Activated CD8-positive, alpha-beta memory T cell treated with anti-CD3 and anti-CD28 coated beads, Interleukin-2, amount 10 ng/mL, durations not matched to agents 7 days and 5 days (primary cell): ENCODE measurements at regions of chr11 and their contacts with region 1.

Region 1: DNA sequence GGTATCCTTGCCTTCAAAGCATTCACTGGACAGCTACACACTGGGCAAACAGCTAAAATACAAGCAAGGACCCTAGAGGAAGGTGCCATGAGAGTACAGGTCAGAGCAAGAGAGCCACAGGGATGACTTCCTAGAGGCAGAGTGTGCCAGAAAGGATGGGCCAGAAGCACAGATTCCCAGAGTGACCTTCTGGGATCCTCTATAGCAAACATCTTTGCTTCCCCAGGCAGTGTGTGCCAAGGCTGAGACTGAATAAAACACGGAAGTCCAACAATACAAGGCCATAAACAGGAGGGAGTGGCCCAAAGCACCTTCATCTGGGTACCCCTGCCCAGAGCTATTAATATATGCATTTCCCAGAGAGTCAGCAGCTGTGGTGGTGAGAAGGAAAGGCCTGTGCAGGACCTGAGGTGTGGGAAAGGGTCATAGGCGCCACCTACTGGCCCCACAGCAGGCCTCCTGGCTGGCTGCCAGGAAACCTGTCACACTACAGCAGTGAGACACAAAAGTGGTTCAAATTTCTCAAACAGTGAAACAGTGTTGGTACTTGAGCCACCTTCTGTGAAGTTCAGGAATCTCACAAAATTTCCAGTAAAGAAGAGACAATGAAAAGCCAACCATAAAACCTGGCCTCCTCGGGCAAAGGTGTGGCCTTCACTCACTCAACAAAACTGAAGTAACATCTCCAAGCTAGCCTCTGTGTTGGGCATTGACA is 20.3 kb downstream of the CLPB start:
- DNase-seq: peak; percentile 86
- ATAC-seq: peak; percentile 93
- H3K4me3 Mint-ChIP-seq: no peak overlapping the region
- H3K27ac Mint-ChIP-seq: peak overlapping the region; percentile 15
- H3K4me1 Mint-ChIP-seq: peaks cover 25% of the 10 kb centered on the region
- H3K27me3 Mint-ChIP-seq: no peaks in the 10 kb centered on the region

Region 2: GRCh38 chr11:72293910-72294615 is 120.0 kb before region 1 on chr11:
- CTCF ChIA-PET with region 1: interaction called, 18 read pairs
- DNase-seq: peak; percentile 33
- ATAC-seq: no peak
- H3K4me3 Mint-ChIP-seq: no peak overlapping the region
- H3K27ac Mint-ChIP-seq: no peak overlapping the region
- H3K4me1 Mint-ChIP-seq: peaks cover 2% of the 10 kb centered on the region
- H3K27me3 Mint-ChIP-seq: no peaks in the 10 kb centered on the region

Region 3: GRCh38 chr11:72328366-72329224 is 85.5 kb before region 1 on chr11:
- CTCF ChIA-PET with region 1: interaction called, 40 read pairs
- DNase-seq: peak; percentile 62
- ATAC-seq: peak; percentile 55
- H3K4me3 Mint-ChIP-seq: no peak overlapping the region
- H3K27ac Mint-ChIP-seq: peak overlapping the region; percentile 64
- H3K4me1 Mint-ChIP-seq: peaks cover 62% of the 10 kb centered on the region
- H3K27me3 Mint-ChIP-seq: no peaks in the 10 kb centered on the region

Region 4: DNA sequence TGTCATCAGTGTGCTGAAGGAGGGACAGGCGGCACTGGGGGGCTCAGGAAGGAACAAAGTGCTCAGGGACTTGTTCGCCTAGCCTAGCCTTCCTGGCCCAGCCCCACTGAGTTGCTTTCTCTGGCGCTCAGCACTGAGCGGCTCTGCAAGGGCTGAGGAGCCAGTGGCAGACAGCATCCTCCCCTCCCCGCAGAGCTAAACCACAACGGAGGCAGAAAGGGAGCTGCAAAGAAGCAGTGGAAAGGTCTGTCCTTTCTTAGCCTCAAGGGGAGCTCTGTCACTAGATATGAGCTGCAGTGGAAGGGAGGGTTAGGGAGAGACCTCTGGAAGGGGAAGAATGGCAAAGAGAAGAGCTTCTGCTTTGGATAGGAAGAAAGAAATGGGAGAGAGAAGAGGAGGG is 80.4 kb before region 1 on chr11:
- CTCF ChIA-PET with region 1: interaction called, 40 read pairs
- DNase-seq: peak; percentile 89
- ATAC-seq: peak; percentile 95
- H3K4me3 Mint-ChIP-seq: no peak overlapping the region
- H3K27ac Mint-ChIP-seq: peak overlapping the region; percentile 77
- H3K4me1 Mint-ChIP-seq: peaks cover 40% of the 10 kb centered on the region
- H3K27me3 Mint-ChIP-seq: no peaks in the 10 kb centered on the region

Region 5: GRCh38 chr11:72534565-72535547 is 120.8 kb after region 1 on chr11:
- CTCF ChIA-PET with region 1: no interaction called
- DNase-seq: no peak
- ATAC-seq: no peak
- H3K4me3 Mint-ChIP-seq: no peak overlapping the region
- H3K27ac Mint-ChIP-seq: no peak overlapping the region
- H3K4me1 Mint-ChIP-seq: no peaks in the 10 kb centered on the region
- H3K27me3 Mint-ChIP-seq: peaks cover 55% of the 10 kb centered on the region